ENCODE measurements at regions of chr1 and their contacts with region 1.

Region 1: GRCh38 chr1:28877132-28877781 is 37.1 kb upstream of the EPB41 start:
- DNase-seq: peak; percentile 68 to 75 (median 71)
- H3K4me3 ChIP-seq: no peak overlapping the region
- H3K4me3 Mint-ChIP-seq: no peak overlapping the region
- H3K27ac ChIP-seq: no peak overlapping the region
- H3K27ac Mint-ChIP-seq: peak overlapping the region in 3 of 7 donors; percentile 32 to 57 (median 42)
- H3K4me1 ChIP-seq: peaks cover 5% of the 10 kb centered on the region
- H3K4me1 Mint-ChIP-seq: peaks cover 6 to 10% (median 7%) of the 10 kb centered on the region in 4 donors
- H3K27me3 ChIP-seq: no peaks in the 10 kb centered on the region
- H3K27me3 Mint-ChIP-seq: peaks cover 1 to 7% of the 10 kb centered on the region in 2 donors

Region 2: DNA sequence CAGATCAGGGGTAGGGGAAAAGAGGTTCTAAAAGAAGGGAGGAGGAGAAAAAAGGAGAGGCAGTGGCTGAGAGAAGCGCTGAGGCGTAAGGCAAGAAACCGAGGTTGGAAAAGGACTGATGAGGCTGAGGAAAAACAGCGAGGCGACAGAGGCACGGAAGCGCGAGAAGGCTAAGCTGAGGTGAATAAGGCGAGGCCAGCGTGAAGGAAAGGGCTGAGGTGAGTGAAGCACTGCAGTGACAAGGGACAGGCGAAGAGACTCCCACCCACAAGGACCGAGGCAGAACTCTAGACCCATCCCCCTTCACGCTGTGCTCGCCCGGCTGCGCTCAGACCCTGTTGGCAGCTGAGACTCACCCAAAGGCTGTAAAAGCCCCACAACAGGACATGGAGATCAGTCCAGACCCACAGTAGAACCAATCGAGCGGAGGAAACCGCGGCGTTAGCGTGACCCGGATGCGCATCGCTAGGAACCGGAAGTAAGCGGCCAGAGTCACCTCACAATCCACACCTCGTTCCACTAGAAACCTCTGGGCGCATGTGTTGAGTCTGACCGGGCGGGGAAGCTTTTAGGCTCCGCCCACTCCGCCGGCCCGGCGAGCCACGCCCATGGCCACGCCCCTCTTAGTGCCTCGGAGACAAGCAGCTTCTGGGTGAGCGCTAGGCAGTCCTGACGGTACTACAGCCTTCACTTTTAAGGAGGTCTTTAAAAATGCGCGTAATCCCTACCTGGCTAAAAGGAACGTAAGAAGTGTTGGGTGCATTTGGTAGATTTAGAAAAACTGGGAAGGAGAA is 788.9 kb before region 1 on chr1 and contains the start of gene EYA3:
- CTCF ChIA-PET with region 1: interaction called, 17 read pairs
- POLR2A ChIA-PET with region 1: no interaction called
- intact Hi-C with region 1: loop called (anchors 2 kb)
- DNase-seq: peak; percentile 98 to 100 (median 99)
- H3K4me3 ChIP-seq: peak within 1 kb of the TSS; percentile 93 to 99
- H3K4me3 Mint-ChIP-seq: peak within 1 kb of the TSS; percentile 93 to 98 (median 96)
- H3K27ac ChIP-seq: peak within 1 kb of the TSS; percentile 81
- H3K27ac Mint-ChIP-seq: peak within 1 kb of the TSS; percentile 87 to 99 (median 98)
- H3K4me1 ChIP-seq: peaks cover 33% of the 10 kb centered on the region
- H3K4me1 Mint-ChIP-seq: peaks cover 22 to 48% (median 36%) of the 10 kb centered on the region in 4 donors
- H3K27me3 ChIP-seq: no peaks in the 10 kb centered on the region
- H3K27me3 Mint-ChIP-seq: no peaks in the 10 kb centered on the region
- total RNA-seq, gene EYA3: 21.1 to 22.6 TPM

Region 3: DNA sequence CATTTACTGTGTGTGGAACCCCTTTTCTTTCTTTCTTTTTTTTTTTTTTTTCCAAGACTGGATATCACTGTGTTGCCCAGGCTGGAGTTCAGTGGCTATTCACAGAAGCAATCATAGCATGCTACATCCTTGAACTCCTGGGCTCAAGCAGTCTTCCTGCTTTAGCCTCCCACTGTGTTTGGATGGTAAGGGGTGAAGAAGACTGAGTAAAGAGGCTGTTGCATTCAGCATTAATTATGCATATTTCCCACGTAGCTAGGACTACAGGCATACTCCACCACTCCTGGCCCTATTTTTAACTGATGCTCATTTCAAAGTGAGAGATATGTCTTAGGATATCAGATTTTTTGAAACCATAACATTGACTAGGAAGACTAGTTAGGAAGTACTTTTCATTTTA is 468.2 kb before region 1 on chr1:
- CTCF ChIA-PET with region 1: interaction called, 21 read pairs
- POLR2A ChIA-PET with region 1: interaction called, 3 read pairs
- intact Hi-C with region 1: no loop called
- DNase-seq: no peak
- H3K4me3 ChIP-seq: no peak overlapping the region
- H3K4me3 Mint-ChIP-seq: no peak overlapping the region
- H3K27ac ChIP-seq: no peak overlapping the region
- H3K27ac Mint-ChIP-seq: no peak overlapping the region
- H3K4me1 ChIP-seq: peaks cover 11% of the 10 kb centered on the region
- H3K4me1 Mint-ChIP-seq: peaks cover 0 to 12% (median 6%) of the 10 kb centered on the region in 4 donors
- H3K27me3 ChIP-seq: no peaks in the 10 kb centered on the region
- H3K27me3 Mint-ChIP-seq: no peaks in the 10 kb centered on the region

Region 4: DNA sequence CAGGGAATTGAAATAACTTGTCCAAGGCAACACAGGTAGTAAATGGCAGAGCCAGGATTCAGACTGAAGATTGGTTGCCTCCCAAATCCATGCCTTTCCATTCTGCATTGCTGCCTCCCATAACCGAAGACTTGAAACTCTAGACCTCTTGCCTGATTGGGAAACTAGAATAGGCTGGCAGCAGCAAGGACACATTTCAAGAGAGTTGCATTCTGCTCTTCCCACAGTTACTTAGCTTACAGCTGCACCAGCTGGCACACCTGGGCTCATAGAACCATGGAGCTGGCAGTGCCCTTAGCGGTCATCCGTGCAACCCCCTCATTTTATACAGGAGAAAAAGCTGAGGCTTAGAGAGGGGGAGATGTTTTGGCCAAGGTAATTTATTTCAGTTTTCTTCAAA is 316.4 kb before region 1 on chr1:
- CTCF ChIA-PET with region 1: no interaction called
- POLR2A ChIA-PET with region 1: no interaction called
- intact Hi-C with region 1: no loop called
- DNase-seq: no peak
- H3K4me3 ChIP-seq: no peak overlapping the region
- H3K4me3 Mint-ChIP-seq: no peak overlapping the region
- H3K27ac ChIP-seq: no peak overlapping the region
- H3K27ac Mint-ChIP-seq: no peak overlapping the region
- H3K4me1 ChIP-seq: no peaks in the 10 kb centered on the region
- H3K4me1 Mint-ChIP-seq: peaks cover 0 to 8% (median 0%) of the 10 kb centered on the region in 4 donors
- H3K27me3 ChIP-seq: no peaks in the 10 kb centered on the region
- H3K27me3 Mint-ChIP-seq: no peaks in the 10 kb centered on the region

Region 5: DNA sequence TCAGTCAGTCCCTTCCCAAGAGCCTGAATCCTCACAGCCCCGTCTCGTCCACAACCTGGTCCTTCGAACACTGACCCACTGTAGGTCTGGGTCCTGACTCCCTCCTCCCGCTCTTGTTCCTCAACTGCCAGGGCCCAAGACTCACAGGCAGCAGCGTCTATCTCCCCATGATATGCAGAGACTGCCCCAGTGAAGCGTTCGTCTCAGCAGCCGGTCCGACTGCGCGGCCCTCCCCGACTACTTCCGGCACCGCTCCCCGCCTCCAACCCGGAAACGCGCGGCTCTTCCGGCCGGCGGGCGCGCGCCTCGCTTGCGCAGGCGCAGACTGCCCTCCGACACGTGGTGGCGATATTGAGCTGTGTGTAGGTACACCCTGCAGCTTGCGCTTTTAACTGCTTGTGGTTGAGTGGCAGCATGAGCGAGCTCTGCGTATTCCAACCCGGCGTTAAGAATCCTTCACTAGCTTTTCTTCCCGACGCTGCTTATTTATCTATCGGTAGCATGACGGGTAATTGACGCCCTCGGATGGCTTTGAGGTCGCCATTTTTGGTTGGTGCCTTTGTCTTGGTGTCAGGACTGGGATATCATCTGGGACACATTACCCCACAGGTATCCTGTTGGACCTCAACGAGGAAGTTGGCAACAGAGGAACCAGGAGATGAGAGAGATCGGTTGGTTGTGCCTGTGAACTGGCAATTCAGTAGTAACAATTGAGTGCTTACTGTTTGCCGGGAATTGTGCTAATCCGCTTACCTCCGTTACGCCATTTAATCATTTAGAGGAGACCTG is 234.2 kb before region 1 on chr1 and contains the start of gene TAF12:
- CTCF ChIA-PET with region 1: interaction called, 23 read pairs
- POLR2A ChIA-PET with region 1: interaction called, 22 read pairs
- intact Hi-C with region 1: loop called (anchors 1 kb)
- DNase-seq: peak; percentile 88 to 92 (median 91)
- H3K4me3 ChIP-seq: peak within 1 kb of the TSS; percentile 89 to 99
- H3K4me3 Mint-ChIP-seq: peak within 1 kb of the TSS; percentile 96 to 100 (median 99)
- H3K27ac ChIP-seq: peak within 1 kb of the TSS; percentile 74
- H3K27ac Mint-ChIP-seq: peak within 1 kb of the TSS; percentile 97 to 100 (median 98)
- H3K4me1 ChIP-seq: peaks cover 48% of the 10 kb centered on the region
- H3K4me1 Mint-ChIP-seq: peaks cover 32 to 62% (median 46%) of the 10 kb centered on the region in 4 donors
- H3K27me3 ChIP-seq: no peaks in the 10 kb centered on the region
- H3K27me3 Mint-ChIP-seq: no peaks in the 10 kb centered on the region
- total RNA-seq, gene TAF12: 23.5 to 25.2 TPM

Region 6: DNA sequence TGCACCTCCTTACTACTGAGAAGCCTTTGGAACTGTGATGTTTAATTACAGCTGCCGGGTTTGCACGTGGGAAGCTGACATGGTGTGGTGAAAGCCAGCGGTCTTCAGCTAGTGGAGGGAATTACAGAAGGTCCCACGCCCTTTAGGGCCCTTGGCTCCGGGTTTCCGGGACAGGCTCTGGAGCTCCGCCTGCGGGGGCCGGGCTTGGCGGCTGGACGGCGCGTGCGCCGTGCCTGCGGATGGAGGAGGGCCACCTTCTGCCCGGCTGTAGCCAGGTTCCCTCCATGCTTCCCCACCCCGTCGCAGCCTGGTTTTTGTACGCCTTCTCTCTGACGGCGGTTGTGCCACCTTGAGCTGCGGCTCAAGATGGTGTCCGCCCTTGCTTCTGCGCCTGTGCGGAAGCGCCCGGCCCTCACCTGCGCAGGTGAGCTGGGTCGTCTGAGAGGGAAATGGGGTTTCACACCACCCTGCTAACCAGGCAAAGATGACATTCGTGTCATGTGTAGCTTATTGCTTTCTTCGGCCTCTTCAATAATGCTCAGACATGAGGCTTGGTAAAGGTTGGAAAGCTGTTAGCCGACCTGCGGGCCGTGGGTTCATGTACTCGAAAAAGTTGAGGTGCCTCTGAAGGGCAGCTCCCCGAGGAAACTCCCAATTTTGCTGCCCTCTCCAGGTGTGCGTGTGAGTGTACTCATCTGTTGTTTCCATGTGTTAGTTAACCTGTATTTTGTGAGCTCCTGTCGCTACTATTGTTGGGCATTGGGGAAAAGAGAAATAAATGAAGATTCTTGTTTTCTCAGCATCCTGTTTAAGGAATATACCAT is 101.9 kb before region 1 on chr1:
- CTCF ChIA-PET with region 1: interaction called, 19 read pairs
- POLR2A ChIA-PET with region 1: no interaction called
- intact Hi-C with region 1: no loop called
- DNase-seq: peak; percentile 66 to 81 (median 74)
- H3K4me3 ChIP-seq: peak overlapping the region; percentile 8 to 64
- H3K4me3 Mint-ChIP-seq: peak overlapping the region; percentile 81 to 91 (median 85)
- H3K27ac ChIP-seq: peak overlapping the region; percentile 28
- H3K27ac Mint-ChIP-seq: peak overlapping the region; percentile 70 to 93 (median 87)
- H3K4me1 ChIP-seq: peaks cover 6% of the 10 kb centered on the region
- H3K4me1 Mint-ChIP-seq: peaks cover 5 to 13% (median 9%) of the 10 kb centered on the region in 4 donors
- H3K27me3 ChIP-seq: no peaks in the 10 kb centered on the region
- H3K27me3 Mint-ChIP-seq: no peaks in the 10 kb centered on the region

Region 7: GRCh38 chr1:28792644-28793121 is 84.6 kb before region 1 on chr1:
- CTCF ChIA-PET with region 1: interaction called, 80 read pairs
- POLR2A ChIA-PET with region 1: interaction called, 3 read pairs
- intact Hi-C with region 1: no loop called
- DNase-seq: no peak
- H3K4me3 ChIP-seq: no peak overlapping the region
- H3K4me3 Mint-ChIP-seq: no peak overlapping the region
- H3K27ac ChIP-seq: no peak overlapping the region
- H3K27ac Mint-ChIP-seq: no peak overlapping the region
- H3K4me1 ChIP-seq: no peaks in the 10 kb centered on the region
- H3K4me1 Mint-ChIP-seq: peaks cover 0 to 2% (median 0%) of the 10 kb centered on the region in 4 donors
- H3K27me3 ChIP-seq: no peaks in the 10 kb centered on the region
- H3K27me3 Mint-ChIP-seq: peaks cover 4 to 8% of the 10 kb centered on the region in 2 donors

Region 8: GRCh38 chr1:28822788-28823187 is 54.5 kb before region 1 on chr1:
- CTCF ChIA-PET with region 1: no interaction called
- POLR2A ChIA-PET with region 1: no interaction called
- intact Hi-C with region 1: no loop called
- DNase-seq: no peak
- H3K4me3 ChIP-seq: no peak overlapping the region
- H3K4me3 Mint-ChIP-seq: no peak overlapping the region
- H3K27ac ChIP-seq: no peak overlapping the region
- H3K27ac Mint-ChIP-seq: peak overlapping the region in 2 of 7 donors; percentile 29 to 30
- H3K4me1 ChIP-seq: no peaks in the 10 kb centered on the region
- H3K4me1 Mint-ChIP-seq: no peaks in the 10 kb centered on the region
- H3K27me3 ChIP-seq: no peaks in the 10 kb centered on the region
- H3K27me3 Mint-ChIP-seq: peaks cover 3 to 4% of the 10 kb centered on the region in 2 donors